Heart left ventricle (tissue), 16 donors: ENCODE measurements at regions of chr2 and their contacts with region 1.

Region 1: GRCh38 chr2:119311356-119311755 is 55.3 kb downstream of the C2orf76 start:
- DNase-seq: no peak
- ATAC-seq: peak in 3 of 4 donors; percentile 12 to 24 (median 23)
- H3K4me3 ChIP-seq: no peak overlapping the region
- H3K27ac ChIP-seq: peak overlapping the region in 1 of 12 donors; percentile 31
- H3K4me1 ChIP-seq: peaks cover 0 to 30% (median 14%) of the 10 kb centered on the region in 12 donors
- H3K27me3 ChIP-seq: no peaks in the 10 kb centered on the region
- CTCF ChIP-seq: no peak
- POLR2A ChIP-seq: no peak

Region 2: DNA sequence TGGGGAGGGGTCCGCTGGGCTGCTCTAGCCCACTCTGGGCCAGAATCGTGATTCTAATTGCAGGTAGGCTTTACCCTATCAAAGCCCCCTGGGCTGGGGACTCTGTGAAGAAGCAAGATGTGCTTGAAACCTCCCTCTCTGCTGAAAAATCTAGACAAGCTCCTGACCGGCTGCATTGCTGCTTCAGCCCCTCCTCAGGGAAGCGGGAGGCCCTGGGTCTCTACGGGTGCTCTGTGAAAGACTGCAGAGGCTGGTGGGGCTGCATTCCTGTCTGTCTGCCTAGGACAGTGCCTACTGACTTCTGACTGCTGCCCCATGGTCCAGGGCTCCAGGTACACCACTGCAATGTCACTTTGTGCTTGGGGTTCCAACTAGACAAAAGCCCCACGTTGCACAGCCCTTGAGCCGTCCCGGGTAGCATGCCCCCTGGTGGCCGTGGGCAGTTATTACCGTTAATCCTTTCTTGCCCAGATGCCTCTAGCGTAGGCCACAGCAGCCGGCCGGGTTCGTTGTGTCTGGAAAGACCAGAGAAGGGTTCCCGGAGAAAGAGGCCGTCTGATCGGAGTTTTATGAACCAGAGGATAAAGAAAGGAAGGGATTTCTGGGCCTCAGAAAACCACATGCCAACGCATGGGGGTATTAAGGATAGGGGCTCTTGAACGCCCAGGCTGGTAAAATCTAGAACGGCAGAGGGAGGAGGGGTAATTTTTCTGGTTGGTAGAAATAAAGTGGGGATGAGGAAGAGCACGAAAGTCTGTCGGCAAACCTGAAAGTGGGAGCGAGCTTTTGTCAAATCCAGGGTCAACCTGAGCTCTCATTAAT is 136.9 kb before region 1 on chr2:
- intact Hi-C with region 1: no loop called
- DNase-seq: peak in 2 of 5 donors; percentile 31 to 34
- ATAC-seq: peak in 3 of 4 donors; percentile 51 to 64 (median 54)
- H3K4me3 ChIP-seq: no peak overlapping the region
- H3K27ac ChIP-seq: no peak overlapping the region
- H3K4me1 ChIP-seq: peaks cover 0 to 4% (median 0%) of the 10 kb centered on the region in 12 donors
- H3K27me3 ChIP-seq: peaks cover 0 to 9% (median 0%) of the 10 kb centered on the region in 9 donors
- CTCF ChIP-seq: peak; percentile 52 to 79 (median 64)
- POLR2A ChIP-seq: no peak

Region 3: GRCh38 chr2:119359774-119360173 is 48.4 kb after region 1 on chr2:
- intact Hi-C with region 1: loop called in 2 of 10 experiments (anchors 5 to 10 kb)
- DNase-seq: no peak
- ATAC-seq: no peak
- H3K4me3 ChIP-seq: no peak overlapping the region
- H3K27ac ChIP-seq: peak overlapping the region in 1 of 12 donors; percentile 19
- H3K4me1 ChIP-seq: peaks cover 0 to 37% (median 19%) of the 10 kb centered on the region in 12 donors
- H3K27me3 ChIP-seq: no peaks in the 10 kb centered on the region
- CTCF ChIP-seq: no peak
- POLR2A ChIP-seq: no peak